Activated naive CD4-positive, alpha-beta T cell treated with anti-CD3 and anti-CD28 coated beads for 36 hours (primary cell): ENCODE measurements at regions of chr6 and their contacts with region 1.

Region 1: GRCh38 chr6:41367700-41368099 is 32.3 kb downstream of the NCR2 start:
- DNase-seq: peak; percentile 54
- H3K4me3 Mint-ChIP-seq: no peak overlapping the region
- H3K27ac Mint-ChIP-seq: no peak overlapping the region
- H3K4me1 Mint-ChIP-seq: peaks cover 16% of the 10 kb centered on the region
- H3K27me3 Mint-ChIP-seq: peaks cover 29% of the 10 kb centered on the region

Region 2: DNA sequence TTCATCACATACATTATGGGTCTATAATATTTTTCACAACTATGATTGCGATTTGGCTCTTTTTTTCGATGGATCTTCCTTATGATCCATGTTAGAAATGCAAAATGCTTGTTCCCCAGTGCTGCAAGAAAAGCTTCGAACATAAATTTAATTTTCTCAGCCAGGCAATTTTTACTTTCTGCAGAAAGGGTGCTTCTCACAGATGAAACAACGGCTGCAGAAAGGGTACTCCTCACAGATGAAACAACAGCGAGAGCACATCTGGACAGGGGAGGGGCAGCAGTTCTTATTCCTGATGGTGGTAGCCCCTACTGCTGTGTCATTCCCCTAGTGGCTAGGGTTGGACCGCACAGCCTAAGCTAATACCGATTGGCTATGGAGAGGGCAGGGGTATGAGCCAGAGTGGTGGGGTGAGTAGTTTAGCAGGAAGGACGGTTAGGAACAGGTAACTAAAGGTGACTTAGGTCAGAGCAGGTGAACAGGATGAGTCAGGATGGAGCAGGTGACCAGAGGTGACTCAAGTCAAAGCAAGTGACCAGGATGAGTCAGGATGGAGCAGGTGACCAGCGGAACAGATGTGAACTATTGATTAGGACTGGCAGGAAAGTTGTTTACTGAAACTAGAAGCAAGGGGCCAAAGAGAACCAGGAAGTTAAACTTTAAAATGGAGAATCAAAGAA is 153.0 kb before region 1 on chr6:
- CTCF ChIA-PET with region 1: no interaction called
- intact Hi-C with region 1: no loop called
- DNase-seq: no peak
- H3K4me3 Mint-ChIP-seq: no peak overlapping the region
- H3K27ac Mint-ChIP-seq: no peak overlapping the region
- H3K4me1 Mint-ChIP-seq: peaks cover 2% of the 10 kb centered on the region
- H3K27me3 Mint-ChIP-seq: no peaks in the 10 kb centered on the region

Region 3: DNA sequence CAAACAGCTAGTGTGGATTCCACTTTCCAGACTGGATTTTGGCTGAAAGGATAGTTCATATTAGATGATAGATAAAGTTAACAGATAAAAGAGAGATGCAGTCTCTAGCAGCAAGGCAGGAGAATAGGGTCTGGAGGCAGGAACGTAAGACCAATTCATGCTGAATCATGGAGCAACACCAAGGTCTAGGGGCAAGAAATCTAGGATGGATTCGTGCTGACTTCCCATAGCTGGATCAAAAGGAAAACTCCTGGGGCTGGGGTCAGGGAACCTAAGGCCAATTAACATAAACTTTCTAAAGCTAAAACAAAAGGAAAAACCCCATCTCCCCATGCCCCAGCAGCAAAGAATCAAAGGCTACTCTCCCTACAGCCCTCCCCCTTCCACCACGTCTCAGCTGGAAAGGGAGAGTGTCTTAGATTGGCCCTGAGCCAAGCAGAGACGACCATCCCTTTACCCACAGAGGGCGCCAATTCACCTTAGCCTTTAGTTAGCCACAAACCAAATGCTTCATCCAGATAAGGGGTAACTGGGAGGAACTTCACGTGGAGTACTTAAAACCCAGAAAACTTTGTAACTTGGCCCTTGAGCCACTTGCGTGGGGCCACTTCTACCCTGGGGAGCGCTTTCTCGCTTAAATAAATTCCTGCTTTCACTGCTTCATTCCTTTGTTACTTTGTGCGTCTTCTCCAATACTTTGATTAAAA is 88.8 kb before region 1 on chr6:
- CTCF ChIA-PET with region 1: interaction called, 6 read pairs
- intact Hi-C with region 1: loop called (anchors 1 kb)
- DNase-seq: peak; percentile 89
- H3K4me3 Mint-ChIP-seq: no peak overlapping the region
- H3K27ac Mint-ChIP-seq: peak overlapping the region; percentile 20
- H3K4me1 Mint-ChIP-seq: peaks cover 14% of the 10 kb centered on the region
- H3K27me3 Mint-ChIP-seq: no peaks in the 10 kb centered on the region

Region 4: DNA sequence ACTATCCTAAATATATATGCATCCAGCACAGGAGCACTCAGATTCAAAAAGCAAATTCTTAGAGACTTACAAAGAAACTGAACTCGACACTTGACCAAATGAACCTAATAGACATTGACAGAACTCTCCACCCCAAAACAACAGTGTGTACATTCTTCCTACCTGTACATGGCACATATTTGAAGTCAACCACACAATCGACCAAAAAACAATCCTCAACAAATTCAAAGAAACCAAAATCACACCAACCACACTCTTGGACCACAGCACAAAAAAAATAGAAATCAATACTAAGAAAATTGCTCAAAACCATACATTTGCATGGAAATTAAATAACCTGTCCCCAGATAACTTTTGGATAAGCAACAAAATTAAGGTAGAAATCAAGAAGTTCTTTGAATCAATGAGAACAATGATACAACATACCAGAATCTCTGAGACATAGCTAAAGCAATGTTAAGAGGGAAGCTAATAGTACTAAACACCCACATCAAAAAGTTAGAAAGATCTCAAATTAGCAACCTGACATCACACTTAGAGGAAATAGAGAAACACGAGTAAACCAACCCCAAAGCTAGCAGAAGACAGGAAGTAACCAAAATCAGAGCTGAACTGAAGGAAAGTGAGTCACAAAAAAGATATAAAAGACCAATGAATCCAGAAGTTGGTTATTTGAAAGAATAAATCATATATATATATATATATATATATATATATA is 68.8 kb before region 1 on chr6:
- CTCF ChIA-PET with region 1: no interaction called
- intact Hi-C with region 1: no loop called
- DNase-seq: no peak
- H3K4me3 Mint-ChIP-seq: peak overlapping the region; percentile 66
- H3K27ac Mint-ChIP-seq: peak overlapping the region; percentile 91
- H3K4me1 Mint-ChIP-seq: peaks cover 76% of the 10 kb centered on the region
- H3K27me3 Mint-ChIP-seq: no peaks in the 10 kb centered on the region

Region 5: DNA sequence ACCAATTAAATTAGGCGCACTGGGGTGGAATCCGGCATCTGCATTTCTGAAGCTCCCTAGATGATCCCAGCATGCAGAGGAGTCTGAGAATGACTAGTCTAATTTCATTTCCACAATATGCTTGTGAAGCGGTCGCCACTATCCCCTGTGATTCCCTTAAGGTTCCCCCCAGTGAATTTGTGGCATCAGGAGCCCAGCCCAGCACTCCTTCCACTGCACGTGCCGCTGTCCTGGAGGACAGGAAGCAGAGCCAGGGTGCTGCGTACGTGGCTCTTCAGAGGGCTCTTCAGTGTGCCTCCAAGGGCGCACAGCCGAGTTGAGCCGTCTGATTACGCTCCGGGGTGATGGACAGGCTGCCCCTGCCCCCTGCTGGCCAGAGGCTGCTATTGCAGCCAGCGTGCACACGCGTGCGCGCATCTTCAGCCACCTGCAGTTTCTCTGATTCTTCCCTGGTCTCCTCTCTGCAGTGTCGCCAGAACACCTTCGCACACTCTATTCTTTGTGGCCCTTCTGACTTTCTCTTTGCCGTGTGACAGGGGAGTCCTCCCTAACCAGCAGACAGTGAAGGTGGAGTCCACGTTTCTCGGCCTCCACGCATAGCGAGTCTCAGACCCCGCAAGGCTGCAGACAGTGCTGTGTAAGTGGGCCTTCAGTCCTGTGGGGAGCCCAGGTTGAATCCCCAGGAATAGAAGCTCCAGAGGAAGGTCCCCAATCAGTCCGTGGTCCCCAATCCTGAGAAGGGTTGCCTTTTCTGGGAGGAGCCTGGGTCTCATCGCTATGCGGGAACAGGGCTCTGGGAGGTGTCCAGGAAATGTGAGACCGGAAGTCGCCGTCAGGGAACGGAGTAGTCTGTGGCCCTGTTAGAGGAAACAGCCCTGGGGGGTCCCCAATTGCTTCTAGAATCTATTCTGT is 48.8 kb before region 1 on chr6:
- CTCF ChIA-PET with region 1: interaction called, 23 read pairs
- intact Hi-C with region 1: no loop called
- DNase-seq: peak; percentile 92
- H3K4me3 Mint-ChIP-seq: peak overlapping the region; percentile 71
- H3K27ac Mint-ChIP-seq: peak overlapping the region; percentile 73
- H3K4me1 Mint-ChIP-seq: peaks cover 13% of the 10 kb centered on the region
- H3K27me3 Mint-ChIP-seq: peaks cover 8% of the 10 kb centered on the region

Region 6: GRCh38 chr6:41344876-41345275 is 22.8 kb before region 1 on chr6:
- CTCF ChIA-PET with region 1: interaction called, 10 read pairs
- intact Hi-C with region 1: no loop called
- DNase-seq: peak; percentile 56
- H3K4me3 Mint-ChIP-seq: no peak overlapping the region
- H3K27ac Mint-ChIP-seq: no peak overlapping the region
- H3K4me1 Mint-ChIP-seq: peaks cover 23% of the 10 kb centered on the region
- H3K27me3 Mint-ChIP-seq: no peaks in the 10 kb centered on the region

Region 7: DNA sequence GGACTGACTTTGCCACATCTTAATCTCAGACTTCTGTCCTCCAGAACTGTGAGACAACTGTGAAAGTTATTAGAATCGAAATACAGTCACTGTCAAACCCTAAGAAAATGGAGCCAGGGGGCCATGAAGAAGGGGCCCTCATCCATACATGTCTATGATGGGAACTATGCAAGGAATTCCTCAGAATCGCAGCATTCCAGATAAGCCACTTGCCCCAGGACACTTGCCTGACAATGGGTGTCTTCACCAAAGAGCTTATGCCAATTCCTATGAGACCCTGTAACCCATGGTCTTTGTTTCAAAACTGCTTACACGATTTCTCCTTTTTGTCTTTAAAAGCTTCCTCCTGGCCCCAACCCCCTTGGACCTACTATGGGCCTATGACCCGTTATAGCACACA is 88.1 kb after region 1 on chr6:
- CTCF ChIA-PET with region 1: no interaction called
- intact Hi-C with region 1: loop called (anchors 2 kb)
- DNase-seq: no peak
- H3K4me3 Mint-ChIP-seq: no peak overlapping the region
- H3K27ac Mint-ChIP-seq: no peak overlapping the region
- H3K4me1 Mint-ChIP-seq: no peaks in the 10 kb centered on the region
- H3K27me3 Mint-ChIP-seq: peaks cover 4% of the 10 kb centered on the region

Region 8: GRCh38 chr6:41591859-41592502 is 224.3 kb after region 1 on chr6:
- CTCF ChIA-PET with region 1: interaction called, 3 read pairs
- intact Hi-C with region 1: loop called (anchors 1 kb)
- DNase-seq: peak; percentile 89
- H3K4me3 Mint-ChIP-seq: no peak overlapping the region
- H3K27ac Mint-ChIP-seq: no peak overlapping the region
- H3K4me1 Mint-ChIP-seq: no peaks in the 10 kb centered on the region
- H3K27me3 Mint-ChIP-seq: no peaks in the 10 kb centered on the region

Region 9: DNA sequence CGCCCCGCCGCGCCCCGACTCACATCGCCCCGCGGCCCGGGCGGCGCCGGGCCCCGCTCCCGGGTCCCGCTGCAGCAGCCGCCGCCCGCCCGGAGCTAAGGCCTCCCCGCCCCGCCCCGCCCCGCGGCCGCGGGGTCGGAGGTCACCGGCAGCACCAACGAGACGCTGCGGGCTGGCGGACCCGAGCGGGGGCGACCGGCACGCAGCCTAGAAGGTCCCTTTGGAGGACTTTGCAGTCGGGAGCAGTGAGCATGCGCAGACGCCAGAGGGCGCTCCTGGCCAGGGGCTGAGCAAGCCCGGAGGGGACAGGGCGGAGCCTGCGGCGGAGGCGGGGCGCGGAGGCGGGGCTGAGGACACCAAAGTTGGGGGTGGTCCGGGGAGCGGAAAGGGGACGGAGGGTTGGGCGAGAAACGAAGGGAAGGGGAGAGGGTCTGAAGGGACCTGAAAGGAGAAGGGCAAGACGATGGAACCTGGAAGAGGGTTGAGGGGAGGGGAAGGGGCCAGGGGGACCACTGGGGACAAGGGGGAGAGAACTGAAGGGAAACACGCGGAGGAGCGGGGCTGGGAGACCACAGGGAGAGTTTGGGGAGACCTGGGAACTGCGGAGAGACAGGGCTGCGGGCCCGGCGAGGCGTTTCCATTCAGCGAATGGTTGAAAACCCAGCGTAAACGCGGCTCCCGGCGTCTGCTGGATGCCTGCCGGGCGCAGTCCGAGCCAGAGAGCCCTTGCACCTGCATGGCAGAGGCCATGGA is 412.3 kb after region 1 on chr6 and contains the start of gene FRS3:
- CTCF ChIA-PET with region 1: interaction called, 4 read pairs
- intact Hi-C with region 1: loop called (anchors 10 kb)
- DNase-seq: peak; percentile 99
- H3K4me3 Mint-ChIP-seq: peak within 1 kb of the TSS; percentile 82
- H3K27ac Mint-ChIP-seq: no peak within 1 kb of the TSS
- H3K4me1 Mint-ChIP-seq: peaks cover 11% of the 10 kb centered on the region
- H3K27me3 Mint-ChIP-seq: peaks cover 4% of the 10 kb centered on the region
- total RNA-seq, gene FRS3: 4.0 to 4.2 TPM